Endothelial cell of umbilical vein (primary cell): ENCODE measurements at regions of chrX and their contacts with region 1.

Region 1: DNA sequence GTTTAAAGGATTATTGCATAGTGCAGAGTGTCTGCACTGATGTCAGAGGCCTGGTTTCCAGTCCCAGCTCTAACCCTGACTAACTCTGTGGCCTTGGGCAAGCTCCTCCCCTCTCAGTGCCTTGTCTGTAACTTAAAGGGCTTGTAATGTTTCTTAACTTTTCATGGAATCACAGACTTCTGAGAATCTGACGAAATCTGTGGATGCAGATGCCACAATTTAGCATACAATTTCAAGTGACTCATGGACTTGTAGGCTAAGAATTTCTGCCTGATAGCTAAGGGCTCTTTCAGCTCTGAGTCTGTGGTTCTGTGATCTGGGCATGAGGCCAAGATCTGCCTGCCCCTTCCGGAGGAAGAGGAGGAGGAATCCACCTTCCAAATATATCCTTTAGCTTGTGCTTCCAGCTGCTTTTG is 236.9 kb downstream of the AR start:
- DNase-seq: peak; percentile 90
- H3K4me3 ChIP-seq: no peak overlapping the region
- H3K27ac ChIP-seq: peak overlapping the region; percentile 71
- H3K4me1 ChIP-seq: peaks cover 15% of the 10 kb centered on the region
- H3K27me3 ChIP-seq: no peaks in the 10 kb centered on the region
- CTCF ChIP-seq: no peak
- POLR2A ChIP-seq: no peak

Region 2: DNA sequence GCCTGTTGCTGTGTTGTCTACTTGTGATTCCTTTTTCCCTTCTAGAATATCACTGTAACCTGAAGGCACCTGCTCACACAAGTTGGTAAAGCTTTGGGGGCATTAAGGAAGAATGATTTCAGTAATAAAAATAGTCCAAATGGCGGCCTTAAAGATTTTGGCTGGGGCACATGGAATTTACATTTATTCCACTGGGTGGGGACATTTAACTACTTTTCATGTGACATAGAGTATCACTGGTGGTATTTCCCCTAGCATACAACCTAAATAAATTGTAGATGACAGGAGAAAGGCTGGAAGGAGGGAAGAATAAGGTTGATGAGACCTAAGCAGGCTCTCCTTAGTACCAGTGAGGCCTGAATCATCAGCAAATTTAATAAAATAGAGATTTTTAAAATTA is 1020.0 kb before region 1 on chrX:
- CTCF ChIA-PET with region 1: no interaction called
- POLR2A ChIA-PET with region 1: no interaction called
- dilution Hi-C with region 1: no loop called
- intact Hi-C with region 1: loop called (anchors 5 kb)
- DNase-seq: peak; percentile 0
- H3K4me3 ChIP-seq: no peak overlapping the region
- H3K27ac ChIP-seq: no peak overlapping the region
- H3K4me1 ChIP-seq: no peaks in the 10 kb centered on the region
- H3K27me3 ChIP-seq: no peaks in the 10 kb centered on the region
- CTCF ChIP-seq: no peak
- POLR2A ChIP-seq: no peak

Region 3: DNA sequence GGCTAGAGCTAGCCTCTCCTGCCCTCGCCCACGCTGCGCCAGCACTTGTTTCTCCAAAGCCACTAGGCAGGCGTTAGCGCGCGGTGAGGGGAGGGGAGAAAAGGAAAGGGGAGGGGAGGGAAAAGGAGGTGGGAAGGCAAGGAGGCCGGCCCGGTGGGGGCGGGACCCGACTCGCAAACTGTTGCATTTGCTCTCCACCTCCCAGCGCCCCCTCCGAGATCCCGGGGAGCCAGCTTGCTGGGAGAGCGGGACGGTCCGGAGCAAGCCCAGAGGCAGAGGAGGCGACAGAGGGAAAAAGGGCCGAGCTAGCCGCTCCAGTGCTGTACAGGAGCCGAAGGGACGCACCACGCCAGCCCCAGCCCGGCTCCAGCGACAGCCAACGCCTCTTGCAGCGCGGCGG is 236.9 kb before region 1 on chrX and contains the start of gene AR:
- CTCF ChIA-PET with region 1: interaction called, 11 read pairs
- POLR2A ChIA-PET with region 1: no interaction called
- dilution Hi-C with region 1: no loop called
- intact Hi-C with region 1: no loop called
- DNase-seq: peak; percentile 72
- H3K4me3 ChIP-seq: peak within 1 kb of the TSS; percentile 26 to 72 (median 61)
- H3K27ac ChIP-seq: no peak within 1 kb of the TSS
- H3K4me1 ChIP-seq: peaks cover 13% of the 10 kb centered on the region
- H3K27me3 ChIP-seq: no peaks in the 10 kb centered on the region
- CTCF ChIP-seq: no peak
- POLR2A ChIP-seq: no peak
- total RNA-seq, gene AR: 10.9 and 16.0 TPM in 2 replicates

Region 4: DNA sequence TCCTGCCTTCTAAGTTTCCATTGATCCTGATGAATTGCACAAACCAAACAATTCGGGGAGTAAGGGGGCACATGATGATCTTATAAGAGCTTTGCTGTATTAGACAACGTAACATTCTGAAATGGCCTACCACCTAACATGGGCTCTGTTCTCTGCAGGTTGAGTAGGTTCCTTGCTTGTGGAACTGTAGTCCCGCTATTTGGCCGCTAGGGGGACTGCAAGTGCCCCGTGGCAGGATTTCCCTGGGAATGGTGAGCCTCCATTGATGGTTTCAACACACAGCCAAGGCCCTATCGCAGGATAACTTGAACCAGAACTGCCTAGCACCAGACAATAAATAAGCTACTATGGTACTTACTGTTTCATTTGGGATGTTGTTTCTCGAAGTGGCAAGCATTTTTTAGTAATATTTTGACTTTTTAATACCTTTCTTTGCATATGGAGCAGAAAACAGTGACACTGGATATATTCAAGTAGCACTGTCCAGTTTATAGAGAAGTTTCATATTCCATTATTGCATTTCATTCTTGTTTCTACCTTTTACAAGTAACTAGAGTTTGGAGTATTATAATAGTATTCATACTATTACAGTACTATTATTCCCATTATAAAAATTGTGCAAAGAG is 225.0 kb before region 1 on chrX:
- CTCF ChIA-PET with region 1: interaction called, 18 read pairs
- POLR2A ChIA-PET with region 1: no interaction called
- dilution Hi-C with region 1: no loop called
- intact Hi-C with region 1: loop called (anchors 1 kb)
- DNase-seq: peak; percentile 31
- H3K4me3 ChIP-seq: no peak overlapping the region
- H3K27ac ChIP-seq: no peak overlapping the region
- H3K4me1 ChIP-seq: peaks cover 22% of the 10 kb centered on the region
- H3K27me3 ChIP-seq: no peaks in the 10 kb centered on the region
- CTCF ChIP-seq: peak; percentile 64 to 68
- POLR2A ChIP-seq: no peak

Region 5: DNA sequence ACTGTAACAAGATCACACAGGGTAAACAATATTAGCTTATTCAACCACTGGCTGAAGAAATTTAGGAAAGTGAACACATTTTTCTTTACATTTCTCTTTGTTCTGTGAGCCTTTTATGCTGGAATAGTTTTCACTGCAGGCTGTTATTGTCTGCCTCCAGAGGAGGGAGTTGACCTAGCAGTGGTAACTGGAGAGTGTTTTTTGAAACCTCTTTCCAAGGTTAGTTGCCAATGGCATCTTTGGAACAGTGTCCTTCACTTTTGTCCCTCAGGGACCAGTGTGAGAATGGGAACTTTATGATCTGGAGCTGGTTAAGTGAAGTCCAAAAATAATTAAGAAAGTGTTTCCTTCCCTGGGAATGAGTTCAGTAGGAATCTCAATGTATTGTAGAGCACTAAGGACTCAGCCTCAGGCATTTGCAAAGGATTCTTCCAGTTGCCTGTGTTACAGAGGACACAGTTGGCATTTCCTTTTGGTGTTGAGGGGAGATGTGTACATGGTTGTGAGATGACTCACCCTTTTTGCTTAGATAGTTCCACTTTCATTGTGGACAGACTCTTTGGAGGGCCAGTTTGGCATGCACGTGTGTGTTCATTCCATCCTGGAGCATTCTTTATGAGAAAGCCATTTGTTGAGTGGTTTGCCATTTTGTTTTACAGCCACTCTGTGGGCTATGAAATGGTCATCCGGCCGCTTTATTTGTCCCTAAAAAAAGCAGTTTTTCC is 175.6 kb before region 1 on chrX:
- CTCF ChIA-PET with region 1: no interaction called
- POLR2A ChIA-PET with region 1: no interaction called
- dilution Hi-C with region 1: no loop called
- intact Hi-C with region 1: loop called (anchors 2 kb)
- DNase-seq: peak; percentile 73
- H3K4me3 ChIP-seq: no peak overlapping the region
- H3K27ac ChIP-seq: peak overlapping the region; percentile 92
- H3K4me1 ChIP-seq: peaks cover 22% of the 10 kb centered on the region
- H3K27me3 ChIP-seq: no peaks in the 10 kb centered on the region
- CTCF ChIP-seq: peak in 1 of 2 donors; percentile 20
- POLR2A ChIP-seq: no peak

Region 6: GRCh38 chrX:67734111-67734753 is 46.5 kb before region 1 on chrX:
- CTCF ChIA-PET with region 1: no interaction called
- POLR2A ChIA-PET with region 1: no interaction called
- dilution Hi-C with region 1: no loop called
- intact Hi-C with region 1: loop called (anchors 1 kb)
- DNase-seq: peak; percentile 80
- H3K4me3 ChIP-seq: no peak overlapping the region
- H3K27ac ChIP-seq: no peak overlapping the region
- H3K4me1 ChIP-seq: peaks cover 13% of the 10 kb centered on the region
- H3K27me3 ChIP-seq: no peaks in the 10 kb centered on the region
- CTCF ChIP-seq: no peak
- POLR2A ChIP-seq: no peak